WTC11 (cell line): ENCODE measurements at regions of chr5 and their contacts with region 1.

Region 1: GRCh38 chr5:159987031-159987674 is 21.8 kb upstream of the TTC1 start:
- DNase-seq: peak; percentile 88
- ATAC-seq: peak; percentile 94
- H3K4me3 Mint-ChIP-seq: peak overlapping the region; percentile 64
- H3K27ac Mint-ChIP-seq: no peak overlapping the region
- H3K4me1 Mint-ChIP-seq: 0 out of 2 replicates have a peak, but pooled peaks cover 3% of the 10 kb centered on the region
- H3K27me3 Mint-ChIP-seq: peaks cover 51% of the 10 kb centered on the region
- CTCF ChIP-seq: peak; percentile 39; the same call in 1 of the 2 replicates

Region 2: GRCh38 chr5:159316519-159317383 is 670.4 kb before region 1 on chr5:
- CTCF ChIA-PET with region 1: interaction called, 11 read pairs
- POLR2A ChIA-PET with region 1: no interaction called
- DNase-seq: peak; percentile 46
- ATAC-seq: peak; percentile 96
- H3K4me3 Mint-ChIP-seq: no peak overlapping the region
- H3K27ac Mint-ChIP-seq: no peak overlapping the region
- H3K4me1 Mint-ChIP-seq: no peaks in the 10 kb centered on the region
- H3K27me3 Mint-ChIP-seq: peaks cover 2% of the 10 kb centered on the region
- CTCF ChIP-seq: 0 out of 2 replicates have a peak, but pooled peaks have one; percentile 29

Region 3: DNA sequence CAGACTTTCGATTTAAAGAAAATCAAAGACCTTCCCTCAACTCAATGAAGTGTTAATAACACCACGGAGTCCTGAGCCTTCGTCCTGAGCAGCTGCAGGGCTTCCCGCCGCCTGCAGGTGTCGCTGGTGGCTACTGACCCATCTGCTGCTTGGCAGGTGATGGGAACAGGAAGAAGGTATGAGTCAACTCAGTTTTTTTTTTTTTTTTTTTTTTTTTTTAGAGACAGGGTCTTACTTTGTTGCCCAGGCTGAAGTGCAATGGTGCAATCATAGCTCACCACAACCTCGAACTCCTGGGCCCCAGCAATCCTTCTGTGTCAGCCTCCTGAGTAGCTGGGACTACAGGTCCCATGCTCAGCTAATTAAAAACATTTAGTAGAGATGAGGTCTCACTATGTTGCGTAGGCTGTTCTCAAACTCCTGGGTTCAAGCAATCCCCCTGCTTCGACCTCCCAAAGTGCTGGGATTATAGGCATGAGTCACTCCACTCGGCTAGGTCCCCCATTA is 471.2 kb before region 1 on chr5:
- CTCF ChIA-PET with region 1: interaction called, 11 read pairs
- POLR2A ChIA-PET with region 1: no interaction called
- DNase-seq: peak; percentile 81
- ATAC-seq: peak; percentile 97
- H3K4me3 Mint-ChIP-seq: no peak overlapping the region
- H3K27ac Mint-ChIP-seq: no peak overlapping the region
- H3K4me1 Mint-ChIP-seq: no peaks in the 10 kb centered on the region
- H3K27me3 Mint-ChIP-seq: peaks cover 2% of the 10 kb centered on the region; the same call in 1 of the 2 replicates
- CTCF ChIP-seq: peak; percentile 84

Region 4: DNA sequence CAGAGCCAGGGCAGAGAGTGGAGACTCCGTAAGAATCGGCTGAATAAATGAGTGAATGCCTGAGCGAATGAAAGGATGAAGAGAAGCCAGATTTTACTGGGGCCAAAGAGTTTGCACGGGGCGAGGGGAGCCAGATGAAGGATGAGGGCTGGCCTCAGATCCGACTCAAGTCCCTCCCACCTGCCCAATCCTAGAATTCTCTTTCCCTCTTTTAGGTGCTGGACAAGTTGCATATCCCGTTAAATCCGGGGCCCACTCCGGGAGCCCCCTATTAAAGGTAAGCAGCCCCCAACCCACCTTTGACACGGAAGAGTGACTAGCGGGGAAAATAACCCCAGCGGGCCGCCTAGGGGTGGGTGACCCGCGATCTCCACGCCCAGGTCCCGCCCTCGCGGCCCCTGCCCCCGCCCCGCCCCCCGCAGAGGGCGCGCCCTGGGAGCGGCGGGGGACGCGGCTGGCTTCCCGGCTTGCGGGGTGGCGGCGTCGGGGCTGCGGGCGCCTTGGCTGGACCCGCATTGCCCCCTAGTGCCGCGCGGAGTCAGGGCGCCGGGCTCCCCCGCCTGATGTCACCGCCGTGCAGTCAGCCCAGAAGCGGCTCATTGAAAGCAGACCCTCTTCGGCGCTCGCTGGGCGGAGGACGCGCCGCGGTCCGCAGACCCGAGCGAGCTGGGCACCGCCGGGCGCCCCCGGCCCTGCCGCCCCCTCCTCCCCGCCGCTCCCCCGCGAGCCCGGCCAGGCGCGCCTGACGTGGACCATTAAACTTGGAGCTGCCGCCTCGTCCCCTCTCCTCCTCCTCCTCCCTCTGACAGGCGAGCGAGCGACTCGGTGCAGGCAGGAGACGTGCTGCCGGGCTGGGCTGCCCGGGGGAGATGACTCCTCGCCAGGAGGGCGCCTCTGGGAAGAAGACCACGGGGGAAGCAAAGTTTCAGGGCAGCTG is 71.0 kb before region 1 on chr5 and contains the start of gene ADRA1B:
- CTCF ChIA-PET with region 1: interaction called, 26 read pairs
- POLR2A ChIA-PET with region 1: no interaction called
- DNase-seq: peak; percentile 80
- ATAC-seq: peak; percentile 91
- H3K4me3 Mint-ChIP-seq: peak within 1 kb of the TSS; percentile 78
- H3K27ac Mint-ChIP-seq: no peak within 1 kb of the TSS
- H3K4me1 Mint-ChIP-seq: peaks cover 9% of the 10 kb centered on the region
- H3K27me3 Mint-ChIP-seq: peaks cover 47% of the 10 kb centered on the region
- CTCF ChIP-seq: peak; percentile 37; the same call in 1 of the 2 replicates
- total RNA-seq, gene ADRA1B: 0.11 to 0.16 TPM in 2 of 3 replicates, not detected in the other

Region 5: GRCh38 chr5:159971931-159972461 is 15.2 kb before region 1 on chr5:
- CTCF ChIA-PET with region 1: interaction called, 12 read pairs
- POLR2A ChIA-PET with region 1: no interaction called
- DNase-seq: peak; percentile 60
- ATAC-seq: peak; percentile 77
- H3K4me3 Mint-ChIP-seq: peak overlapping the region; percentile 58
- H3K27ac Mint-ChIP-seq: no peak overlapping the region
- H3K4me1 Mint-ChIP-seq: peaks cover 12% of the 10 kb centered on the region
- H3K27me3 Mint-ChIP-seq: peaks cover 55% of the 10 kb centered on the region
- CTCF ChIP-seq: no peak